Posterior vena cava (tissue), 2 donors: ENCODE measurements at regions of chr7 and their contacts with region 1.

Region 1: DNA sequence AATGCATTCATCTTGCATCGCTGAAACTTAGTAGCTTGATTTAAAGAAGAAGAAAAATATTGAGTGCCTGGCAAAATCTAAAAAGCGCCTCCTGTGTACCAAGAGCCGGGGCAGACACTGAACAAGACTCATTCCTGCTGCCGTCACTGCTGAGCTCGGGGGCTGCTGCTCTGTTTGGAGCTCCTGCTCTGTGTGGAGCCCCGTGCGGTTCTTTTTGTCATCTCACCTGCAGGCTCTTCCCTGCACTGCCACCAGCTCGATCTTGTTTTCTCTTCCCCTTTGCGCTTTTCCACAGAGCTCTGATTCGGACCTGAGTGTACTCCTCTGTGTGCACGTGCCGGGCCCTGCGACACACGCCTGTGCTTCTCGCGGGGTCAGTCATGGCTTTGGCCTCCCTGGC is 462.1 kb upstream of the DPP6 start:
- DNase-seq: no peak

Region 2: DNA sequence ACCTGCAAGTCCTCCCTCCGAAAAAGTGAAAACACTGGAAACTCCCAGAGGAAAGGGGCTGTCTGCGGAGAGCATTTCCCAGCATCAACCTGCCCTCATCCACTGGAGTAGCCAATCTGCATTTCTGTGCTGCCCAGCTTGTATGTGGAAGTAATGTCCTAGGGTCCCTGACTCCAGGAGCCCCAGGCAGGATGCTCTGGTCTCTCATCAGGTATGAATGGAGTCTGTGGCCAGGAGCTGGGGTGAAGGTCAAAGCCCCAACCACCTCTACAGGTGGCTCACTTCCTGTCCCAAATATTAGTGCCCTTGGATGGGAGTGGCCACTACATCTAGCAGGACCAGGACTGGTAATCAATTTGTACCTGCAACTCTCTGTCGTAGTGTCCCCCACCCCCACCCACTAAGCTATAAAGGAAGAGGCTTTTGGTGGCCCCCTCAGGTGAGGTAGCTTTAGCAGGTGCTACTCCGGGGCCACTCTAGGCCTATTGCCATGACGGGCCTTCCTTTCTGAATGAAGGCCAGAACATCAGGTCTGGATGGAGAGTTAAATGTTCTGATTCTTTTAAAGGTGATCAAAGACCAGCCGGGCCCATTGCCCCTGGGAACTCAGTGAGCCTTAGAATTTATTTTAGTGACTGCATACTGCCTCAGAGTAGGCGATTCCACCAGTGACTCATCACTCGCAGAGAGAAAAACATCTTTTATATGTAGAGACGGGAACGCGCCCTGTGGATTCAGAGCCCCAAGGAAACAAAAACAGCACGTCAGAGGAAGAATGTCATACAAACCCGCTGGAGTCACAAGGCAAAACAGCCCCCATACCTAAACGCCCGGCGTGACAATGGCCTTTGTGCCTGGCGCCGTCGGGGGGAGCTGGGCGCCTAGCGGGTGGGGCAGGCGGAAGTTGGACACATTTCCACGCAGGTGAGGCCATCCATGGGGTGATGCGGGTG is 1880.8 kb after region 1 on chr7:
- intact Hi-C with region 1: loop called in 1 of 2 experiments (anchors 5 kb)
- DNase-seq: peak; percentile 54